GM12878 (cell line): ENCODE measurements at regions of chr1 and their contacts with region 1.

Region 1: GRCh38 chr1:223695941-223696340 is 16.4 kb upstream of the CAPN2 start:
- DNase-seq: no peak
- ATAC-seq: no peak
- H3K4me3 ChIP-seq: no peak overlapping the region
- H3K27ac ChIP-seq: no peak overlapping the region
- H3K4me1 ChIP-seq: peaks cover 3% of the 10 kb centered on the region; the same call in 1 of the 2 replicates
- H3K27me3 ChIP-seq: no peaks in the 10 kb centered on the region
- CTCF ChIP-seq: no peak
- EP300 ChIP-seq: no peak
- POLR2A ChIP-seq: no peak
- RAD21 ChIP-seq: no peak

Region 2: GRCh38 chr1:223683586-223684487 is 12.1 kb before region 1 on chr1:
- CTCF ChIA-PET with region 1: interaction called, 11 read pairs
- POLR2A ChIA-PET with region 1: no interaction called
- RAD21 ChIA-PET with region 1: no interaction called
- SMC1A ChIA-PET with region 1: interaction called, 4 read pairs
- in situ Hi-C with region 1: no loop called
- intact Hi-C with region 1: no loop called
- DNase-seq: no peak
- ATAC-seq: peak; percentile 81
- H3K4me3 ChIP-seq: no peak overlapping the region
- H3K27ac ChIP-seq: no peak overlapping the region
- H3K4me1 ChIP-seq: no peaks in the 10 kb centered on the region
- H3K27me3 ChIP-seq: no peaks in the 10 kb centered on the region; a peak in 2 of 4 replicates
- CTCF ChIP-seq: peak; percentile 53 to 75 (median 67)
- EP300 ChIP-seq: no peak
- POLR2A ChIP-seq: no peak
- RAD21 ChIP-seq: peak; percentile 80

Region 3: DNA sequence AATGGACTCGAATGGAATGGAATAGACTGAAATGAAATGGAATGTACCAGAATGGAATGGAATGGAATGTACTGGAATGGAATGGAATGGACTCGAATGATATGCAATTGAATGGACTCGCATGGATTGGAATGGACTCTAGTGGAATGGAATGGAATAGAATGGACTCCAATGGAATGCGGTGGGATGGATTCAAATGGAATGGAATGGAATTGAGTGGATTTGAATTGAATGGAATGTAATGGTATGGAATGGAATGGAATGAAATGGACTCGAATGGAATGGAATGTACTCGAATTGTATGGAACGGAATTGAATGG is 318.3 kb after region 1 on chr1:
- CTCF ChIA-PET with region 1: no interaction called
- POLR2A ChIA-PET with region 1: no interaction called
- RAD21 ChIA-PET with region 1: no interaction called
- SMC1A ChIA-PET with region 1: no interaction called
- in situ Hi-C with region 1: no loop called
- intact Hi-C with region 1: loop called (anchors 10 kb)
- DNase-seq: no peak
- ATAC-seq: no peak
- H3K4me3 ChIP-seq: no peak overlapping the region
- H3K27ac ChIP-seq: no peak overlapping the region
- H3K4me1 ChIP-seq: no peaks in the 10 kb centered on the region
- H3K27me3 ChIP-seq: no peaks in the 10 kb centered on the region
- CTCF ChIP-seq: no peak
- EP300 ChIP-seq: no peak
- POLR2A ChIP-seq: no peak
- RAD21 ChIP-seq: no peak